ENCODE measurements at regions of chr14 and their contacts with region 1.

Region 1: DNA sequence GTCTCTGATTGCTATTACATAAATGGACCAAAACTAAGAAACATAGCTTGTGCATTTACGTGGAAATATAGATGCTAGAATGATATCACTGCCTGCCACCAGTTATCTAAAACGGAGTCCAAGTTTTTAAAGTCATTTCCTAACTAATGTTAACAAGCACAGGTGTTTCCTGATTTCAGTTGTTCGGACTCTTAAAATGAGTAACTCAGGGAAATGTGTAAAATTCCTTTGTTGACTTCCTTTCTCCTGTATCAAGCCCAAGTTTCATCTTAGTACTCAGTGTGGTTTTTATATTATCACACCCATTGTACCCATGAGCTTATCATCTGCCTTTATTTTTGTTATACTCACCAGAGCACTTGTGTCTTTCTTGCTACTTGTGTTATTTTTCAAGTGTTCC is 13.2 kb upstream of the PRKCH start:
- DNase-seq: no peak
- H3K4me3 ChIP-seq: no peak overlapping the region
- H3K27ac ChIP-seq: no peak overlapping the region
- H3K4me1 ChIP-seq: no peaks in the 10 kb centered on the region
- H3K27me3 ChIP-seq: no peaks in the 10 kb centered on the region
- CTCF ChIP-seq: no peak
- POLR2A ChIP-seq: no peak

Region 2: GRCh38 chr14:61388173-61388975 is 80.2 kb after region 1 on chr14:
- intact Hi-C with region 1: no loop called
- DNase-seq: no peak
- H3K4me3 ChIP-seq: no peak overlapping the region
- H3K27ac ChIP-seq: no peak overlapping the region
- H3K4me1 ChIP-seq: no peaks in the 10 kb centered on the region
- H3K27me3 ChIP-seq: no peaks in the 10 kb centered on the region
- CTCF ChIP-seq: no peak
- POLR2A ChIP-seq: no peak

Region 3: DNA sequence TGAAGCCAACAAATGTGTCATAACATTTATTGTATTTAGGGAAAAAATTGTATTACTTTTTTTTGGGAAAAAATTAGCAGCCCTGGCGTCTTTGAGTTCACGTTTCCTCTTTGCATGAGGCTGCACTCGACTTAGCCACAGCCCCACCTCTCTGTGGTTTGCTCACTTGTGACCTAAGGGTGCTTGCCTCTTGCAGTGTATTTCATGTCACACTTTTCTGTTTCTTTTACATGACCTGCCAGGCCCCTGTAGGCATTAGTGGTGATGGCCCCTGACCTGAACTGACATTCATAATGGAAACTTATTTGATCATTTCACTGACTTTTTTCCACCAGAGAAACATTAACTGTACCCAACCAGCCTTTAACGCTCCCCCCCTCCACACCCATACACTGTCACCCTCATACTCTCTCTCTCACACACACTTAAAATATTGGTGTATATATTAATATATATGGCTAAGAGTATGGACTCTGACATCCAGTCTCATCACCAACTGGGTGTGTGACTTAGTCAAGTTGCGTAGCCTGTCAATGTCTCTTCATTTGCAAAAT is 136.1 kb after region 1 on chr14:
- intact Hi-C with region 1: no loop called
- DNase-seq: no peak
- H3K4me3 ChIP-seq: no peak overlapping the region
- H3K27ac ChIP-seq: no peak overlapping the region
- H3K4me1 ChIP-seq: peaks cover 7% of the 10 kb centered on the region
- H3K27me3 ChIP-seq: no peaks in the 10 kb centered on the region
- CTCF ChIP-seq: no peak
- POLR2A ChIP-seq: no peak

Region 4: DNA sequence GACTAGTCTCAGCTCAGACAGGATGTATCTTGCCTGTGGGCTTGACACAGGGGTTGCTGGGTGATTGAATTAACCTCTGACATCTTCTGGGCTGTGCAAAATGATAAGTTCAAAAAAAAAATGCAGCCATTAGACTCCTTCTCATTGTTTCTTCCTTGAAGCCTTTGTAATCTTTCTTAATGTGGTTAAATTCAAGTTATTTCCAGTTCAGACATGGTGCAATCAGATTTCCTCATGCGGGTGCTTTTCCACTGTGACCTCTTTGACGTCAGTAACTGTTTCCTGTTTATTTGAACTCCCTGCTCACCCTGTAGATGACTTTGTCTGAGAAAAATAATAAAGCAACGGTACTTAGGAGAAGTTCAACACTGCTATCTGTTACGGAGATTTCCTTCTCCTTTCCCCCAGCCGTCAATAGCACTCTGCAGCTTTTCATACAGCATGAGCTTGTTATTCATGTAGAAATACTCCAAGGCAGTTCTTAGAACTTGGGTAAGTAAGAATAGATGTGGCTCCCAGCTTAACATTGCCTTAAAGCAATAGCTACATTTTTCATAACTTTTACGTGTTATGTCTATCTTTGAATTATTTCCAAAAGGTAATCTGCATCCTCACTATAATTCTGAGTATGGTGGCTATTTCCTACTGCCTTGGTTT is 168.7 kb after region 1 on chr14:
- intact Hi-C with region 1: no loop called
- DNase-seq: no peak
- H3K4me3 ChIP-seq: no peak overlapping the region
- H3K27ac ChIP-seq: peak overlapping the region; percentile 62 to 63
- H3K4me1 ChIP-seq: no peaks in the 10 kb centered on the region
- H3K27me3 ChIP-seq: no peaks in the 10 kb centered on the region
- CTCF ChIP-seq: no peak
- POLR2A ChIP-seq: peak; percentile 6

Region 5: DNA sequence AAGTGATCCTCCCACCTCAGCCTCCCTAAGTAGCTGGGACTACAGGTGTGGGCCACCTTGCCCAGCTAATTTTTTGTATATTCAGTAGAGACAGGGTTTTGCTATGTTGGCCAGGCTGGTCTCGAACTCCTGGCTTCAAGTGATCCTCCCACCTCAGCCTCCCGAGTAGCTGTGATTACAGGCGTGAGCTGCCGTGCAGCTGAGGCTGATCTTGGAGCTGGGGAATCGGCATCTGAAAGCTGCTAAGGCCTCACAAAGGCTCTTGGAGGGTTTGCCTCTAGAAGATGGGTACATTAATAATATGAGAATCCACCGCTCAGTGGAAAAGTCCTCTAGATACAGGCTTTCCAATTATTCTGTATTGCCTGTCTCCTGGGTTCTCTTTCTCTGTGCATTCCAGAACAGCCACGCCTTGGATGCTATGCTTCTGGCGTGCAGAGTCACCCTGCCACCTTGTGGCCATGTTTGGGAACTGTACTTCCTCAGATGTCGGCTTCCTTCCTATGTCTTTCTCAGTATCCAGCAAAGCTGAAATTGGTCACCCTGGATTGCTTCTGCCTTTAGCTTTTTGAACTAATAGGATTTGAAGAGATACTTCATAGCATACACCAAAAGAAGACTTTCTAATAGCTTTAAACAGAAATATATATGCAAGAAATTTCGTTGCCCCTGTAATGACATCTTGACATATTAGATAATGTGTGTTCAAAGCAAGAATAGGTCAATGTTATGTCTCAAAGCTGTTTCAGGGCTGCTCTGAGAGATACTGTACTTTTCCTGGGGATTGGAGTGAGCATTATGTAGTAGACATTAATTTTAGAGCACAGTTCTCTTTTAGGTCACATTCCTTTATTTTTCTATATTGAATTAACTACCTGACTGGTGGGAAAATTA is 529.4 kb after region 1 on chr14:
- intact Hi-C with region 1: loop called (anchors 10 kb)
- DNase-seq: peak; percentile 82
- H3K4me3 ChIP-seq: no peak overlapping the region
- H3K27ac ChIP-seq: no peak overlapping the region
- H3K4me1 ChIP-seq: no peaks in the 10 kb centered on the region
- H3K27me3 ChIP-seq: no peaks in the 10 kb centered on the region
- CTCF ChIP-seq: peak; percentile 81 to 93 (median 92)
- POLR2A ChIP-seq: no peak

Measured in prostate gland (tissue), 2 donors.